GM10248 (cell line): ENCODE measurements at regions of chr1 and their contacts with region 1.

Region 1: DNA sequence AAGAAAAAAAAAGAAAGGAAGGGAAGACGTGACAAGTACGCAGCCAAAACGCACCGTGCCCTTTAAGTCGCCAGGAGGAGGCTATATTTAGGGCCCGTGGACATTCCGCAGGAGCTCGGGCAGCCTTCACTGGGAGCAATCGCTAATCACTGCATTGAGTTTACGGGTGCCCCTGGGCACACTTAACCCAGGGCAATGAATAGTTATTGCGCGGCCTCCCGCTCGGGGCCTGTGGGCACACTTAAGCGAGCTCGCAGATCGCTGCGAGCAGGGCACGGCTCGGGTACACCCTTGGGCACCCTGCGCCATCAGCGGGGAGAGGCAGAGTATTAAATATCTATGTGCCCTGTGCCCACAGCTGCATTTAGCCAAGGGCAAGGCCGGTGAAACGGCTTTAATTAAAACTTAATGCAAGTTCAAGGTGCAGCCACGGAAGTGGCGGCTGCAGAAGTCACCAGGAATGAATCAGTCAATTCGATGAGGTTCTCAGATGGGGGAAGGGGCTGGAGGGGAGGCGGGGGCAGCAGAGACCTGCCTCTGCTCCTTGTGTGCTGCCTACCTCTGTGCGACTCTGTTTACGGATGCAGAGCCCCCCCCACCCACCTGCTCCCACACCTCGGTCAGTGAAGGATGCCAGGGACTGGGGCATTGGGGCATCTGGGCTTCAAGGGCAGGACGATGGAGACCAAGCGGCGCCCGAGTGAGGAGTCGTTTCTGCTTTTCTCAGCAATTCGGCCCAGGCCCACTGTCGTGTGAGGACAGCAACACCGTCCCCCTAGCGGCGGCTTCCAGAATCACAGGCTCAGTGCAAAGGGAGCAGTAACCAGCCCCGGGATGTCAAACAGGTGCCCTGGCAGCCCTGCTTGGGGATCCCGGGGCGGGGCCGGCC is 51.8 kb upstream of the TARDBP start:
- DNase-seq: peak; percentile 88
- CTCF ChIP-seq: peak; percentile 80

Region 2: GRCh38 chr1:10941891-10942541 is 18.6 kb before region 1 on chr1:
- CTCF ChIA-PET with region 1: interaction called, 13 read pairs
- POLR2A ChIA-PET with region 1: no interaction called
- DNase-seq: peak; percentile 84
- CTCF ChIP-seq: peak; percentile 87

Region 3: GRCh38 chr1:10950316-10951172 is 10.1 kb before region 1 on chr1:
- CTCF ChIA-PET with region 1: interaction called, 22 read pairs
- POLR2A ChIA-PET with region 1: no interaction called
- DNase-seq: no peak
- CTCF ChIP-seq: no peak